ENCODE measurements at regions of chr7 and their contacts with region 1.

Region 1: GRCh38 chr7:92785923-92786322 is 50.5 kb downstream of the CDK6 start:
- DNase-seq: no peak
- ATAC-seq: no peak
- H3K4me3 ChIP-seq: no peak overlapping the region
- H3K4me3 Mint-ChIP-seq: no peak overlapping the region
- H3K27ac ChIP-seq: no peak overlapping the region
- H3K27ac Mint-ChIP-seq: no peak overlapping the region
- H3K4me1 ChIP-seq: no peaks in the 10 kb centered on the region
- H3K4me1 Mint-ChIP-seq: peaks cover 31% of the 10 kb centered on the region
- H3K27me3 ChIP-seq: no peaks in the 10 kb centered on the region
- H3K27me3 Mint-ChIP-seq: no peaks in the 10 kb centered on the region
- CTCF ChIP-seq: no peak

Region 2: DNA sequence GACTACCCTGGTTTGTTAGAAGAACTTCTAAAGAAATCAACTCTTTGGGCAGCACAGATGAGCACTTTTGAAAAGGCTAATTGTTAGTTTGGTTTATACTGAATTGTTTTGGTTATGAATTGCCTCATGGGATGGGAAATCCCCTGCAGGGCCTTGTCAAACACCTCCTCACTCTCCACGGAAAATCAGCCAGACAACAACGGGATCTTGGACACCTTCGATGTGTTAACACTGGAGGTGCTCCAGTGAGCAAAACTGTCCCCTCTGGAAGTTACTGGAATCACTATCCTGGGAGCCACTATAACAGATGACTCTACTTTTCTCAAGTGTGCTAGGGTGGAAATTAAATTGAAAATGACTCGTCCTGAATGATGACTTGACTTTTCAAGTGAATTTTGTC is 11.8 kb after region 1 on chr7:
- CTCF ChIA-PET with region 1: no interaction called
- POLR2A ChIA-PET with region 1: no interaction called
- intact Hi-C with region 1: loop called in 1 of 2 experiments (anchors 2 kb)
- DNase-seq: peak in 2 of 9 experiments; percentile 16 to 43
- ATAC-seq: no peak
- H3K4me3 ChIP-seq: no peak overlapping the region
- H3K4me3 Mint-ChIP-seq: no peak overlapping the region
- H3K27ac ChIP-seq: no peak overlapping the region
- H3K27ac Mint-ChIP-seq: no peak overlapping the region
- H3K4me1 ChIP-seq: no peaks in the 10 kb centered on the region
- H3K4me1 Mint-ChIP-seq: peaks cover 26% of the 10 kb centered on the region
- H3K27me3 ChIP-seq: no peaks in the 10 kb centered on the region
- H3K27me3 Mint-ChIP-seq: no peaks in the 10 kb centered on the region
- CTCF ChIP-seq: no peak

Measured in CD8-positive, alpha-beta T cell (primary cell).